CD4-positive, alpha-beta T cell (primary cell): ENCODE measurements at regions of chr1 and their contacts with region 1.

Region 1: DNA sequence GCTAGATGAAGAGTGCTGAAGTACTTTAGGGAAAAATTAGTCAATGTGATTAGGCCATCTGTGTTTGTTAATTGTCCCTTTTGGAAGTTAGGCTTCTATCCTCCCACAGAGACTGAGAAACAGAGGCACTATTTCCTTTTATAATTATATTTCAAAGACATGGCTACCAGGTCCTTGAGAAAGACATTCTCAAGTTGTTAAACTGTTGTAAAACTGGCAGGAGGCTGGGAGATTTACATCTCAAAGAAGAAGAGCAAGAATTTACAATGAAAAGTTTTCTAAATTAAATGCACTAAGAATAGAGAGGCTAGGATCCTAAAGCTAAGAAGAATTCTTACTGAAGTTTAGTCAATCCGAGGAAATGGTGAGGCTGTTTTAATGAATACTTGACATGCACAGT is 74.0 kb upstream of the BRINP3 start:
- DNase-seq: no peak
- ATAC-seq: no peak
- H3K4me3 ChIP-seq: no peak overlapping the region
- H3K4me3 Mint-ChIP-seq: no peak overlapping the region
- H3K27ac ChIP-seq: no peak overlapping the region
- H3K27ac Mint-ChIP-seq: no peak overlapping the region
- H3K4me1 ChIP-seq: no peaks in the 10 kb centered on the region
- H3K4me1 Mint-ChIP-seq: no peaks in the 10 kb centered on the region
- H3K27me3 ChIP-seq: no peaks in the 10 kb centered on the region
- H3K27me3 Mint-ChIP-seq: no peaks in the 10 kb centered on the region
- CTCF ChIP-seq: no peak

Region 2: GRCh38 chr1:190615818-190616217 is 64.2 kb after region 1 on chr1:
- CTCF ChIA-PET with region 1: no interaction called
- POLR2A ChIA-PET with region 1: no interaction called
- intact Hi-C with region 1: loop called in 1 of 2 experiments (anchors 10 kb)
- DNase-seq: no peak
- ATAC-seq: no peak
- H3K4me3 ChIP-seq: no peak overlapping the region
- H3K4me3 Mint-ChIP-seq: no peak overlapping the region
- H3K27ac ChIP-seq: no peak overlapping the region
- H3K27ac Mint-ChIP-seq: no peak overlapping the region
- H3K4me1 ChIP-seq: no peaks in the 10 kb centered on the region
- H3K4me1 Mint-ChIP-seq: no peaks in the 10 kb centered on the region
- H3K27me3 ChIP-seq: no peaks in the 10 kb centered on the region
- H3K27me3 Mint-ChIP-seq: no peaks in the 10 kb centered on the region
- CTCF ChIP-seq: no peak